Breast epithelium (tissue), 4 donors: ENCODE measurements at regions of chr1 and their contacts with region 1.

Region 1: GRCh38 chr1:55095095-55095494 is 55.7 kb downstream of the PCSK9 start:
- DNase-seq: no peak
- H3K4me3 ChIP-seq: no peak overlapping the region
- H3K27ac ChIP-seq: no peak overlapping the region
- H3K4me1 ChIP-seq: no peaks in the 10 kb centered on the region
- H3K27me3 ChIP-seq: no peaks in the 10 kb centered on the region
- CTCF ChIP-seq: no peak
- POLR2A ChIP-seq: no peak

Region 2: DNA sequence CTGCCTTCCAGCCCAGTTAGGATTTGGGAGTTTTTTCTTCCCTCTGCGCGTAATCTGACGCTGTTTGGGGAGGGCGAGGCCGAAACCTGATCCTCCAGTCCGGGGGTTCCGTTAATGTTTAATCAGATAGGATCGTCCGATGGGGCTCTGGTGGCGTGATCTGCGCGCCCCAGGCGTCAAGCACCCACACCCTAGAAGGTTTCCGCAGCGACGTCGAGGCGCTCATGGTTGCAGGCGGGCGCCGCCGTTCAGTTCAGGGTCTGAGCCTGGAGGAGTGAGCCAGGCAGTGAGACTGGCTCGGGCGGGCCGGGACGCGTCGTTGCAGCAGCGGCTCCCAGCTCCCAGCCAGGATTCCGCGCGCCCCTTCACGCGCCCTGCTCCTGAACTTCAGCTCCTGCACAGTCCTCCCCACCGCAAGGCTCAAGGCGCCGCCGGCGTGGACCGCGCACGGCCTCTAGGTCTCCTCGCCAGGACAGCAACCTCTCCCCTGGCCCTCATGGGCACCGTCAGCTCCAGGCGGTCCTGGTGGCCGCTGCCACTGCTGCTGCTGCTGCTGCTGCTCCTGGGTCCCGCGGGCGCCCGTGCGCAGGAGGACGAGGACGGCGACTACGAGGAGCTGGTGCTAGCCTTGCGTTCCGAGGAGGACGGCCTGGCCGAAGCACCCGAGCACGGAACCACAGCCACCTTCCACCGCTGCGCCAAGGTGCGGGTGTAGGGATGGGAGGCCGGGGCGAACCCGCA is 55.6 kb before region 1 on chr1 and contains the start of gene PCSK9:
- intact Hi-C with region 1: loop called (anchors 2 kb)
- DNase-seq: no peak
- H3K4me3 ChIP-seq: peak within 1 kb of the TSS; percentile 11 to 59 (median 40)
- H3K27ac ChIP-seq: no peak within 1 kb of the TSS
- H3K4me1 ChIP-seq: no peaks in the 10 kb centered on the region
- H3K27me3 ChIP-seq: peaks cover 0 to 31% of the 10 kb centered on the region in 2 donors
- CTCF ChIP-seq: no peak
- POLR2A ChIP-seq: no peak
- total RNA-seq, gene PCSK9: 0.15 to 0.16 TPM in 2 of 3 donors, not detected in the other

Region 3: GRCh38 chr1:57072401-57073110 is 1977.5 kb after region 1 on chr1:
- intact Hi-C with region 1: no loop called
- DNase-seq: no peak
- H3K4me3 ChIP-seq: no peak overlapping the region
- H3K27ac ChIP-seq: no peak overlapping the region
- H3K4me1 ChIP-seq: no peaks in the 10 kb centered on the region
- H3K27me3 ChIP-seq: no peaks in the 10 kb centered on the region
- CTCF ChIP-seq: no peak
- POLR2A ChIP-seq: no peak